Right cardiac atrium (tissue), 5 donors: ENCODE measurements at regions of chr6 and their contacts with region 1.

Region 1: GRCh38 chr6:46914279-46914810 is 7.4 kb downstream of the ADGRF5 start:
- DNase-seq: no peak
- ATAC-seq: peak in 1 of 2 donors; percentile 58
- H3K4me3 ChIP-seq: no peak overlapping the region
- H3K27ac ChIP-seq: no peak overlapping the region
- H3K4me1 ChIP-seq: peaks cover 2% of the 10 kb centered on the region
- H3K27me3 ChIP-seq: no peaks in the 10 kb centered on the region

Region 2: GRCh38 chr6:46983007-46983411 is 68.7 kb after region 1 on chr6:
- intact Hi-C with region 1: loop called in 1 of 4 experiments (anchors 10 kb)
- DNase-seq: no peak
- ATAC-seq: no peak
- H3K4me3 ChIP-seq: no peak overlapping the region
- H3K27ac ChIP-seq: no peak overlapping the region
- H3K4me1 ChIP-seq: no peaks in the 10 kb centered on the region
- H3K27me3 ChIP-seq: no peaks in the 10 kb centered on the region